ENCODE measurements at regions of chr19 and their contacts with region 1.

Region 1: DNA sequence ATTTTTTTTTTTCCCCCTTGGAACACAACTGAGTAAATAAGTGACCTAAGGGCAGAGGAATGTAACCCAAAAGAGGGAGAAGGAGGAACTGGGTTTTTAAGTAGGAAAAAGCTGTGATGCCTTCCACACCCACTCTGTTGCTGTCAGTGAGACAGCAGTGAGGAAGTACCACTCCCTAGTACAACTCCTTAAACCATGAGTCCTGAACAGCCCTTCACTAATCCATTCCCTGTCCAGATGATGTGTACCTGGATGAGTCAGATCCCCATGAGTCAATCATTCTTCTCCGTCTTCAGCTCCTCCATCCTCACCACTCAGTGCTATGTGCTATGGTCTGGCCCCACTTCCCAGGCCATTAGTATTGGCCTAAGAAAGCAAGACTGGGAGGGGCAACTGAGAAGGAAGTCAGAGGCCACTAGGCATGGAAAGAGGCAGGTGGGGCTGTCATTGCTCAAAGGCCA is 12.9 kb upstream of the CXCL17 start:
- DNase-seq: no peak
- H3K4me3 Mint-ChIP-seq: no peak overlapping the region
- H3K27ac Mint-ChIP-seq: no peak overlapping the region
- H3K4me1 Mint-ChIP-seq: peaks cover 42% of the 10 kb centered on the region
- H3K27me3 Mint-ChIP-seq: peaks cover 23% of the 10 kb centered on the region

Region 2: GRCh38 chr19:42295831-42296525 is 159.7 kb before region 1 on chr19:
- CTCF ChIA-PET with region 1: no interaction called
- DNase-seq: peak; percentile 92
- H3K4me3 Mint-ChIP-seq: no peak overlapping the region
- H3K27ac Mint-ChIP-seq: peak overlapping the region; percentile 34
- H3K4me1 Mint-ChIP-seq: peaks cover 14% of the 10 kb centered on the region
- H3K27me3 Mint-ChIP-seq: no peaks in the 10 kb centered on the region

Region 3: GRCh38 chr19:42440357-42441048 is 15.1 kb before region 1 on chr19:
- CTCF ChIA-PET with region 1: interaction called, 41 read pairs
- DNase-seq: peak; percentile 85
- H3K4me3 Mint-ChIP-seq: no peak overlapping the region
- H3K27ac Mint-ChIP-seq: no peak overlapping the region
- H3K4me1 Mint-ChIP-seq: peaks cover 23% of the 10 kb centered on the region
- H3K27me3 Mint-ChIP-seq: peaks cover 47% of the 10 kb centered on the region

Measured in activated naive CD4-positive, alpha-beta T cell treated with anti-CD3 and anti-CD28 coated beads, Interleukin-2, amount 10 ng/mL, durations not matched to agents 7 days and 5 days (primary cell).